Activated B cell treated with CpG ODN at 0.5 μM for 24 hours (primary cell): ENCODE measurements at regions of chr5 and their contacts with region 1.

Region 1: GRCh38 chr5:172770675-172771438 is at the start of gene DUSP1:
- DNase-seq: peak; percentile 96
- ATAC-seq: peak; percentile 53
- H3K4me3 Mint-ChIP-seq: peak within 1 kb of the TSS; percentile 92
- H3K27ac Mint-ChIP-seq: peak within 1 kb of the TSS; percentile 99
- H3K4me1 Mint-ChIP-seq: peaks cover 73% of the 10 kb centered on the region
- H3K27me3 Mint-ChIP-seq: no peaks in the 10 kb centered on the region
- CTCF ChIP-seq: no peak
- total RNA-seq, gene DUSP1: 15.0 and 21.2 TPM in 2 replicates

Region 2: GRCh38 chr5:172714491-172715421 is 56.1 kb before region 1 on chr5:
- CTCF ChIA-PET with region 1: interaction called, 39 read pairs
- POLR2A ChIA-PET with region 1: interaction called, 16 read pairs
- intact Hi-C with region 1: loop called (anchors 1 kb)
- DNase-seq: peak; percentile 54
- ATAC-seq: peak; percentile 82
- H3K4me3 Mint-ChIP-seq: no peak overlapping the region
- H3K27ac Mint-ChIP-seq: no peak overlapping the region
- H3K4me1 Mint-ChIP-seq: peaks cover 8% of the 10 kb centered on the region
- H3K27me3 Mint-ChIP-seq: peaks cover 15% of the 10 kb centered on the region
- CTCF ChIP-seq: peak; percentile 48

Region 3: DNA sequence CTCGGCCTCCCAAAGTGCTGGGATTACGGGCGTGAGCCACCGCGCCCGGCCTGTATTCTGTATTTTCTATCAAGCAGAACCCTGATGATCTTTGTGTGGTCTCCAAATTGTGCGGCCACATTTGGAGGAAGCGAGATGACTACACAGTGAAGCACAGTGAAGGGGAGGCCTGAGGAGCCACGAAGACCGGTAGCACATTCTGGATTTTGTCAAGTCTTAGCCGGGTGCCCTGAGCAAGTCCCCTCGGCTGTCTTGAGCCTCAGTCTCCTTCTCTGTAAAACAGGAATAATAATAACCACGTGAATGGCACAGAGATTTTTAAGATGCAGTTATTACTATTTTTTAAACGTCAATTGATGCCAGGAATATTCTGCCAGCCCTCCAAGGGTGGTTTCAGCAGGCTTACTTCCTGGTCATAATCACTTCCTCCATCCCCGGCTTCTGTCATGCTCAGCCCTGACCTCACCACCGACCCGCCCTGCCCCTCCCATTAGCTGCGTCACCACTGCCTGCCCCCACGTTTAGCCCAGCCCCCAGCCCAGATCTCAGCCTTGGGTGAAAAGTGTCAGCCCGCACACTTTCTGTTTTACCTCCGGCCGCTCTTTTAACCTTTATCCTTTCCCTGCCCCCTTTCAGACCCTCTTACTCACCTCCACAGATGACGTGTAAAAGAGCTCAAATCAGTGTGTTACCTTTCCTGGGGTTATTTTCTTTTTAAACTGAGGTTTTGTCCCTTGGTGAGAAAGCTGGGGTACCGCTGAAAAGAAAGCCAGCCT is 36.2 kb after region 1 on chr5:
- CTCF ChIA-PET with region 1: interaction called, 26 read pairs
- POLR2A ChIA-PET with region 1: interaction called, 79 read pairs
- intact Hi-C with region 1: loop called (anchors 1 kb)
- DNase-seq: peak; percentile 68
- ATAC-seq: peak; percentile 99
- H3K4me3 Mint-ChIP-seq: peak overlapping the region; percentile 82
- H3K27ac Mint-ChIP-seq: peak overlapping the region; percentile 85
- H3K4me1 Mint-ChIP-seq: peaks cover 15% of the 10 kb centered on the region
- H3K27me3 Mint-ChIP-seq: no peaks in the 10 kb centered on the region
- CTCF ChIP-seq: no peak

Region 4: DNA sequence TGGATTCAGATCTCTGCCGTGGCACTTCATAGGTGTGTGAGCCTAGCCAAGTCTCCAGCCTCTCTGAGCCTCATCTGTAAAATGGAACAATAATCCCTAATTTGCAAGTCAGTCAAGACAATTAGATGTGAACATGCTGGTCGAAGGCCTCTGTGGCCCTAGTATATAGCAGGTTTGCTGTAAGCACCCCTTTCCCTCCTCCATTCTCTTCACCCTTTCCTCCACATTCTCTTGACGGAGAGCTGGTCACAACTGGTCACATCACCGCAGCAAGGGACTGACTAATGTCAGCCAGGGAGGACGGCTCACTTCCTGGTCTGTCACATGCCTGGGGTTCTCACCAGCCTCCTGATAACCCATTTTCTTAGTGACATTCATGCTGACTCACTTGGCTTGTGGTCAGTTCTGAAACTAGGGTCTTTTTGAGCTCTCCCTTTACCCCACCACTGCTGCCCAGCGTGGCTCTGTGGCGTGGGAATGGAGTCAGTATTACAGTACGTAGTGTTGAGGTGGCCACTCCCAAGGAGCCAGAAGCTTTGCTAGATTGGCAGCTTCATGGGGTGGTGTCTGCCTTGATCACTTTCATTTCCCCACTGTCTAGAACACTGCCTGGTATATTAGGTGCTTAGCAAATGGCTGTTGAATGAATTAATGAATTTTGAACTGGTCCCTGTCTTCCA is 111.0 kb after region 1 on chr5:
- CTCF ChIA-PET with region 1: interaction called, 3 read pairs
- POLR2A ChIA-PET with region 1: interaction called, 22 read pairs
- intact Hi-C with region 1: no loop called
- DNase-seq: no peak
- ATAC-seq: peak; percentile 73
- H3K4me3 Mint-ChIP-seq: no peak overlapping the region
- H3K27ac Mint-ChIP-seq: peak overlapping the region; percentile 75
- H3K4me1 Mint-ChIP-seq: peaks cover 22% of the 10 kb centered on the region
- H3K27me3 Mint-ChIP-seq: no peaks in the 10 kb centered on the region
- CTCF ChIP-seq: no peak

Region 5: GRCh38 chr5:172958331-172959046 is 187.6 kb after region 1 on chr5:
- CTCF ChIA-PET with region 1: no interaction called
- POLR2A ChIA-PET with region 1: interaction called, 21 read pairs
- intact Hi-C with region 1: loop called (anchors 1 kb)
- DNase-seq: peak; percentile 64
- ATAC-seq: peak; percentile 76
- H3K4me3 Mint-ChIP-seq: peak overlapping the region; percentile 97
- H3K27ac Mint-ChIP-seq: peak overlapping the region; percentile 94
- H3K4me1 Mint-ChIP-seq: peaks cover 31% of the 10 kb centered on the region
- H3K27me3 Mint-ChIP-seq: no peaks in the 10 kb centered on the region
- CTCF ChIP-seq: no peak

Region 6: GRCh38 chr5:173808134-173808808 is 1037.4 kb after region 1 on chr5:
- CTCF ChIA-PET with region 1: no interaction called
- POLR2A ChIA-PET with region 1: no interaction called
- intact Hi-C with region 1: no loop called
- DNase-seq: no peak
- ATAC-seq: no peak
- H3K4me3 Mint-ChIP-seq: no peak overlapping the region
- H3K27ac Mint-ChIP-seq: no peak overlapping the region
- H3K4me1 Mint-ChIP-seq: peaks cover 9% of the 10 kb centered on the region
- H3K27me3 Mint-ChIP-seq: no peaks in the 10 kb centered on the region
- CTCF ChIP-seq: no peak

Region 7: GRCh38 chr5:174259696-174260420 is 1489.0 kb after region 1 on chr5:
- CTCF ChIA-PET with region 1: no interaction called
- POLR2A ChIA-PET with region 1: no interaction called
- intact Hi-C with region 1: no loop called
- DNase-seq: no peak
- ATAC-seq: no peak
- H3K4me3 Mint-ChIP-seq: no peak overlapping the region
- H3K27ac Mint-ChIP-seq: no peak overlapping the region
- H3K4me1 Mint-ChIP-seq: no peaks in the 10 kb centered on the region
- H3K27me3 Mint-ChIP-seq: peaks cover 2% of the 10 kb centered on the region
- CTCF ChIP-seq: no peak